T-cell (primary cell): ENCODE measurements at regions of chr7 and their contacts with region 1.

Region 1: GRCh38 chr7:112143582-112143981 is 62.6 kb downstream of the DOCK4 start:
- DNase-seq: no peak
- ATAC-seq: no peak
- H3K4me3 ChIP-seq: no peak overlapping the region
- H3K4me3 Mint-ChIP-seq: no peak overlapping the region
- H3K27ac ChIP-seq: no peak overlapping the region
- H3K27ac Mint-ChIP-seq: no peak overlapping the region
- H3K4me1 ChIP-seq: no peaks in the 10 kb centered on the region
- H3K4me1 Mint-ChIP-seq: no peaks in the 10 kb centered on the region
- H3K27me3 ChIP-seq: no peaks in the 10 kb centered on the region
- H3K27me3 Mint-ChIP-seq: peaks cover 8 to 15% of the 10 kb centered on the region in 2 donors

Region 2: DNA sequence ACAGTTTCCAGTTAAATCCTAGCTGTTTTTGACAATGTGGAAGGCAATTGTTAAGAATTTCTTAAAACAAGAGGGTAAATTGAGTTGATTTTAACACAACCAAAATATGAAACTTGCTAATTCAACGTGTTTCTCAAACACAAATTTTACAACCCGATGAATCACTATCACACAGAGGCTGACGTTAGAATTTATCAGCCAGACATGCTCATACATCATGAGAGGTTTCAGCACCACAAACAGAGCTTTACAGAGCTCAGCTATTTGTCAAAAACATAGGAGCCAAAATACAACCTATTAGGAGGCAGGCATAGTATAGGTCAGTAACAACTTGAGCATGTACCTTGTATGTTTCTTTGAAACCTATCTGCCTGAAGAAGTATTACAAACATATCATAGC is 1016.6 kb before region 1 on chr7:
- CTCF ChIA-PET with region 1: interaction called in 1 of 2 experiments, 10 read pairs
- POLR2A ChIA-PET with region 1: no interaction called
- DNase-seq: no peak
- ATAC-seq: no peak
- H3K4me3 ChIP-seq: no peak overlapping the region
- H3K4me3 Mint-ChIP-seq: no peak overlapping the region
- H3K27ac ChIP-seq: no peak overlapping the region
- H3K27ac Mint-ChIP-seq: no peak overlapping the region
- H3K4me1 ChIP-seq: no peaks in the 10 kb centered on the region
- H3K4me1 Mint-ChIP-seq: no peaks in the 10 kb centered on the region
- H3K27me3 ChIP-seq: no peaks in the 10 kb centered on the region
- H3K27me3 Mint-ChIP-seq: no peaks in the 10 kb centered on the region

Region 3: DNA sequence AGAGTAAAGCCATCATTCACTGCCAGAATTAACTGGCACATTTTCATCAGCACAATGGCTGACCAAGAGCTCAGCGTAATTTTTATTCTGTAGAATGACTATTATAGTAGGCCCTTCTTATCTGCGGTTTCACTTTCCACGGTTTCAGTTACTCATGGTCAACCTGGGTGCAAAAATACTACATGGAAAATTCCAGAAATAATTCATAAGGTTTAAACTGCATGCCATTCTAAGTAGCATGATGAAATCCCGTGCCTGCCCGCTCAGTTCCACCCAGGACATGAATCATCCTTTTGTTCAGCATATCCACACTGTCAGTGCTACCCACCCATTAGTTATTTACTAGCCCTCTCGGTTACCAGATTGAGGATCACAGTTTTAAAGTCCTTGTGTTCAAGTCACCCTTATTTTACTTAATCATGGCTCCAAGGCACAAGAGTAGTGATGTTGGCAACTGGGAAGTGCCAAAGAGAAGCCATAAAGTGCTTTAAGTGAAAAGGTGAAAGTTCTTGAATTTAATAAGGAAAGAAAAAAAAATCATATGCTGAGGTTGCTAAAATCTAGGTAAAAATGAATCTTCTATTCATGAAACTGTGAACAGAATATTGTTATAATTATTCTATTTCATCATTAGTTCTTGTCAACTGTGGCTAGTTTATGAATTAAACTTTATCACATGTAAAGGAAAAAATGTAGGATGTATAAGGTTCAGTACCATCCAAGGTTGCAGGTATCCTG is 142.3 kb before region 1 on chr7:
- CTCF ChIA-PET with region 1: no interaction called
- POLR2A ChIA-PET with region 1: interaction called in 1 of 2 experiments, 11 read pairs
- DNase-seq: no peak
- ATAC-seq: no peak
- H3K4me3 ChIP-seq: no peak overlapping the region
- H3K4me3 Mint-ChIP-seq: no peak overlapping the region
- H3K27ac ChIP-seq: no peak overlapping the region
- H3K27ac Mint-ChIP-seq: no peak overlapping the region
- H3K4me1 ChIP-seq: no peaks in the 10 kb centered on the region
- H3K4me1 Mint-ChIP-seq: no peaks in the 10 kb centered on the region
- H3K27me3 ChIP-seq: no peaks in the 10 kb centered on the region
- H3K27me3 Mint-ChIP-seq: peaks cover 1 to 7% of the 10 kb centered on the region in 2 donors